Posterior cingulate gyrus (tissue), 11 donors: ENCODE measurements at regions of chr1 and their contacts with region 1.

Region 1: DNA sequence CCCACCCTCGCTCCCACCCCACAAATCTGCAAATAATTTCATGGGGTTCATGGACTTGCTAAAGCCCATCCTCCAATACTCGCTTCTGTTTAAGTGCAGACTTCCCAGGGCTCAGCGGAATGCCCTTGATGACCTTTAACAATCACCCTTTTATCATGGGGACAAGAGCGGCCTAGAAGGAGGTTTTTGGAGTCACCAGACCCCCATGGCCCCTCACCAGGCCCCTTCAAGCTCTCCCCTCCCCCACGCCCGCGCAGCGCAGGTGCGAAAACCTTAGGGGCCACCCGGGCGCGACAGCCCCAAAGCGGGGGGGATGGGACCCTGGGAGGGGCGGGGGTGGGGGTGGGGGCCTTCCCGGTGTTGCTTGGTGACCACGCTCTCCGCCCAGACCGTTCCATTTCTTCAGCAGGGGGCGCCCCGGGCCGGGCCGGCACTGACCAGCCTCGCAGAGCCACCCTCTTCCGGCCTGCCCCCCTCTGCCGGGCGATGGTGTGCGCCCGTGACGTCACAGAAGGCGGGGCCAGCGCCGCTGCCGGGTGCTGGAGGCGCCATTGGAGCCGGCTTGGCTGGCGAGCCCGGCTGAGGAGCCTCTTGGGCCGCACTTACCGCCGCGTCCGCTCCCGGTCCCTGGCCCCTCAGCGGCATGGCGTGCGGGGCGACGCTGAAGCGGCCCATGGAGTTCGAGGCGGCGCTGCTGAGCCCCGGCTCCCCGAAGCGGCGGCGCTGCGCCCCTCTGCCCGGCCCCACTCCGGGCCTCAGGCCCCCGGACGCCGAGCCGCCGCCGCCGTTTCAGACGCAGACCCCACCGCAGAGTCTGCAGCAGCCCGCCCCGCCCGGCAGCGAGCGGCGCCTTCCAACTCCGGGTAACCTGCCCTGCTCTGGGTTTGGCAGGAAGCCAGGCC is at the start of gene AKIRIN1:
- DNase-seq: peak; percentile 98 to 100 (median 100)

Region 2: DNA sequence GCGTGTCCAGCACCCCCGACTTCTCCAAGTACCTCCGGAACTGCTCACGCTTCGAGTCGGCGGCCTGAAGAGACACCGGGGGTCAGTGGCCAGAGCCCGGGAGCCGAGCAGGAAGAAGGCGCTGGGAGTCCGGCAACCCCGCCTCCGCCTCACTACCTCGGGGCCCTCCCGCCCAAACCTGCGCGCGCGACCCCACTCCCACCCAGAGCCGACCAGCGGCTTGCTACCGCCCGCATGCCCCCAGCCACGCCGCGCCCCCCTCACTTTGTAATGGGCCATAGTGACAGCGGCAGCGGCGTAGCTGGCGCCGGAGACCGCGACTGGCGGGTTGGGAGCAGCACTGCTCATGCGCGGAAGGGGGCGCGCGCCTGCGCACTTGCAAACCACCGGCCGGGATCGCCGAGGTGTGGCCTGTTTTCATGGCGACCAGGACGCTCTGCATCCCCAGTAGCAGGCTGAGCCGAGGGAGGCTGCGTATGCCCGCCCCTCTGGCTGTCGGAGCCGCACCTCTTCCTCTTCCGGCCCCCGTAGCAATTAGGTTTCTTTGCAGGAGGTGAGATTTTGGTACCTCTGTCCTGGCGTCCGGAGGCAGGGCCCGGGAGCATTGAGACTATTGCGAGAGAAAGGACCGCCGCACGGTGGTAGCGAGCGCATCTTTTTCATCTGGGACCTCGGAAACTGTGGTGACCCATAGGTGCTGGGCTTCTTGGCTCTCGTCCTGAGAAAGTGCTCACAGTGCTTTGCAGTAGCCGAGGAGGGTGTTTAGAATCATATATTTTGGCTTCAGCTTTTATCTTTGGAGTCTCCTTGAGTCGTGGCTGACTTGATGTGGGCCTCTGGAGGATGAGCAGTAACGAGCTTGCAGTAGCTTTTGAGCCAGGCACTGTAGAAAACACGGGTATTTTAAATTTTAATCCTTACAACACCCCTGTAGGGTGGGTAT is 117.7 kb before region 1 on chr1 and contains the start of gene MYCBP:
- intact Hi-C with region 1: loop called (anchors 5 kb)
- DNase-seq: peak; percentile 94 to 100 (median 96)

Region 3: DNA sequence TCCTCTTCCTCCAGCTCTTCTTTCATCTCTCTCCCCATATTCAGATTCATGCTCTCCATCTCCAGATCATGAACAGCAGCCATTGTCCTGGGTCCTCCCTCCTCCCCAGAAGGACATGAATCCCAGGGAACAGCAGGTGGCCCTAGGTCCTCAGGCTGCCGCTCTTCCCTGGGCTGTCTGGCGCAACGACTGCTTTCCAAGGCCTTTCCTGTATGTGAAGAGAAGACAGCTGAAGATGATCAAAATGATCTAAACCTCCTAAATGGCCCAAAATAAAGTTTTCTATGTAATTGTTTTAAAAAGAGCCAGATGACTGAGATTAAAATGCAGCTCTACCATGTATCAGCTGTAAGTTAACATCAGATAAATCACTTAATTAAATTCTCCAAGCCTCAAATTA is 71.9 kb before region 1 on chr1:
- intact Hi-C with region 1: loop called (anchors 5 kb)
- DNase-seq: peak in 8 of 10 donors; percentile 38 to 95 (median 60)

Region 4: DNA sequence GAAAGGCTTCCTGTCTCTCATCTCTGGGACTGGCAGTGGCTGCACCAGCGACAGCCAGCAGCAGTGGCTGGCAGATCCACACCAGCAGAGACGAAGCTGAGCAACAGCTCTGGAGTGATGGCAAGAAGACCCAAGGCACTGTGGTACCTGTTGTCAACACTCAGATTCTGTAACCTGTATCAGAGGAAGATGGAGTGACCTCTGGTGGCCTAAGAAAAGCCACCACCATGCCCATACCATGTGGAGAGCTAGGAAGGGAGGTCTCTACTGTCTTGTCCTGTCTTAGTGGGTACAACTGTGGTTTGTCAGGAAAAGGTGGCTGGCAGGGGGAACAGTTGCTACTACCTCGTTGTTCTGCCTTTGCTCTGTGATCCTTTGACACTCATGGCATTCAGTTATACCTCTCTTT is 26.8 kb before region 1 on chr1:
- intact Hi-C with region 1: no loop called
- DNase-seq: peak in 1 of 10 donors; percentile 23

Region 5: GRCh38 chr1:39026051-39026865 is 35.3 kb after region 1 on chr1 and contains the start of gene NDUFS5:
- intact Hi-C with region 1: loop called (anchors 2 kb)
- DNase-seq: peak; percentile 77 to 98 (median 91)